ENCODE measurements at regions of chr11 and their contacts with region 1.

Region 1: GRCh38 chr11:126416542-126417090 is 61.1 kb downstream of the ST3GAL4 start:
- DNase-seq: peak; percentile 91
- H3K4me3 ChIP-seq: peak overlapping the region; percentile 44 to 47 (median 44)
- H3K27ac ChIP-seq: peak overlapping the region; percentile 57
- H3K4me1 ChIP-seq: peaks cover 11% of the 10 kb centered on the region
- H3K27me3 ChIP-seq: no peaks in the 10 kb centered on the region
- CTCF ChIP-seq: no peak
- POLR2A ChIP-seq: peak; percentile 76

Region 2: GRCh38 chr11:126345759-126346585 is 70.6 kb before region 1 on chr11:
- CTCF ChIA-PET with region 1: no interaction called
- POLR2A ChIA-PET with region 1: no interaction called
- dilution Hi-C with region 1: no loop called
- intact Hi-C with region 1: loop called (anchors 5 kb)
- DNase-seq: peak; percentile 59
- H3K4me3 ChIP-seq: no peak overlapping the region
- H3K27ac ChIP-seq: peak overlapping the region; percentile 77
- H3K4me1 ChIP-seq: peaks cover 50% of the 10 kb centered on the region
- H3K27me3 ChIP-seq: no peaks in the 10 kb centered on the region
- CTCF ChIP-seq: no peak
- POLR2A ChIP-seq: no peak

Region 3: DNA sequence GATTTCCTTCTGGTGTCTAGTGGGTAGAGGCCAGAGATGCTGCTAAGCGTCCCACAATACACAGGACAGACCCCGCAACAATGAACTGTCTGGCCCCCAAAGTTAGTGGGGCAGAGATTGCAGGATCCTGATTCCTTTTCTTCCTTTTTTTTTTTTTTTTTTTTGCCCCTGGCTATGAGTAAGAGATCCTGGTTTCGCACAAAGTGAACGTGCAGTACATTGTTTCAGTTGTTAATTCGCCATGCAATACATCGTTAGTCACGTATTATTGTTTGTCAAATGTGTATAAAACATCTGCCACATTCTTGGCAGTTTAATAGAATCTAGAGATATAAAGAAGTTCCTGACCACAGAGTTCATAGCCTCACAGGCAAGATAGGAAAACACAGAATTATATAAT is 40.9 kb before region 1 on chr11:
- CTCF ChIA-PET with region 1: no interaction called
- POLR2A ChIA-PET with region 1: no interaction called
- dilution Hi-C with region 1: no loop called
- intact Hi-C with region 1: no loop called
- DNase-seq: peak; percentile 49
- H3K4me3 ChIP-seq: no peak overlapping the region
- H3K27ac ChIP-seq: no peak overlapping the region
- H3K4me1 ChIP-seq: no peaks in the 10 kb centered on the region
- H3K27me3 ChIP-seq: no peaks in the 10 kb centered on the region
- CTCF ChIP-seq: no peak
- POLR2A ChIP-seq: no peak

Region 4: GRCh38 chr11:126431401-126432064 is 14.9 kb after region 1 on chr11:
- CTCF ChIA-PET with region 1: interaction called, 12 read pairs
- POLR2A ChIA-PET with region 1: interaction called, 3 read pairs
- dilution Hi-C with region 1: no loop called
- intact Hi-C with region 1: loop called (anchors 1 kb)
- DNase-seq: peak; percentile 62
- H3K4me3 ChIP-seq: no peak overlapping the region
- H3K27ac ChIP-seq: peak overlapping the region; percentile 58
- H3K4me1 ChIP-seq: peaks cover 11% of the 10 kb centered on the region
- H3K27me3 ChIP-seq: no peaks in the 10 kb centered on the region
- CTCF ChIP-seq: no peak
- POLR2A ChIP-seq: no peak

Region 5: GRCh38 chr11:126452241-126453101 is 35.9 kb after region 1 on chr11:
- CTCF ChIA-PET with region 1: no interaction called
- POLR2A ChIA-PET with region 1: no interaction called
- dilution Hi-C with region 1: no loop called
- intact Hi-C with region 1: no loop called
- DNase-seq: no peak
- H3K4me3 ChIP-seq: no peak overlapping the region
- H3K27ac ChIP-seq: no peak overlapping the region
- H3K4me1 ChIP-seq: no peaks in the 10 kb centered on the region
- H3K27me3 ChIP-seq: peaks cover 0 to 3% of the 10 kb centered on the region in 2 experiments
- CTCF ChIP-seq: no peak
- POLR2A ChIP-seq: no peak

Measured in endothelial cell of umbilical vein (primary cell).